PC-9 (cell line): ENCODE measurements at regions of chr19 and their contacts with region 1.

Region 1: GRCh38 chr19:41570639-41571112 is 5.3 kb upstream of the CEACAM21 start:
- DNase-seq: peak in 1 of 2 experiments; percentile 69
- H3K4me3 ChIP-seq: no peak overlapping the region
- H3K27ac ChIP-seq: no peak overlapping the region
- H3K4me1 ChIP-seq: no peaks in the 10 kb centered on the region
- H3K27me3 ChIP-seq: peaks cover 57% of the 10 kb centered on the region
- CTCF ChIP-seq: peak; percentile 93

Region 2: DNA sequence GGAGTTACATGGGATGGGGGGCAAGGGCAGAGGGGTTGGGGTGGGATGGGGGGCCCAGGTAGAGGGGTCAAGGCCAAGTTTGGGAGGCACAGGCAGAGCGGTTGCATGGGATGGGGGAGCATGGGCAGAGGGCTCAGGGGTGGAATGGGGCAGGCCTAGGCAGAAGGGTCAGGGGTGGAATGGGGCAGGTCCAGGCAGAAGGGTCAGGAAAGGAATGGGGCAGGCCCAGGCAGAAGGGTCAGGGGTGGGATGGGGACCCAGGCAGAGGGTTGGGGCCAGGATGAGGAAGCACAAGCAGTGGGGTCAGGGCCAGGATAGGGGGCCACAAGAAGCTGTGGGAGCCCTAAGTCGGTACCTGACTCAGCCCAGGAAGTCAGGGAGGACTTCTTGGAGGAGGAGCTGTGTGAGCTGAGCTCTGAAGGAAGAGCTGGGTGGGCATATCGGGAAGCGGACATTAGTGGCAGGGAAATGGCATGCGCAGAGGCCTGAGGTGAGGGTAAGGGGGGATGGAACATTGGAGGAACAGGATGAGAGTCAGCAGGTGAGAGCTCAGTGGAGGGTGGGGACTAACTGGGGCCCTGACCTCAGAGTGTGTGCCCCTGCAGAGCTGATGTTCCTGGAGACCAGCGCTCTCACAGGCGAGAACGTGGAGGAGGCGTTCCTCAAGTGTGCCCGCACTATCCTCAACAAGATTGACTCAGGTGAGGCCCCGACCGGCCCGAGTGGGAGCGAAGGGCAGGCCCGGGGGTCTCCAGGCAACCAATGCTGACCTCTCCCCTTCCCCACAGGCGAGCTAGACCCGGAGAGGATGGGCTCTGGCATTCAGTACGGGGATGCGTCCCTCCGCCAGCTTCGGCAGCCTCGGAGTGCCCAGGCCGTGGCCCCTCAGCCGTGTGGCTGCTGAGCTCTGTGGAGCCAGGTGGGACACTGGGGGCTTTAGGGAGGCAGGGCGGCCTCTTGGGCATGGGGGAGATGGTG is 784.3 kb before region 1 on chr19:
- CTCF ChIA-PET with region 1: interaction called, 12 read pairs
- POLR2A ChIA-PET with region 1: no interaction called
- intact Hi-C with region 1: no loop called
- DNase-seq: no peak
- H3K4me3 ChIP-seq: no peak overlapping the region
- H3K27ac ChIP-seq: no peak overlapping the region
- H3K4me1 ChIP-seq: no peaks in the 10 kb centered on the region
- H3K27me3 ChIP-seq: no peaks in the 10 kb centered on the region
- CTCF ChIP-seq: no peak